ENCODE measurements at regions of chr10 and their contacts with region 1.

Region 1: DNA sequence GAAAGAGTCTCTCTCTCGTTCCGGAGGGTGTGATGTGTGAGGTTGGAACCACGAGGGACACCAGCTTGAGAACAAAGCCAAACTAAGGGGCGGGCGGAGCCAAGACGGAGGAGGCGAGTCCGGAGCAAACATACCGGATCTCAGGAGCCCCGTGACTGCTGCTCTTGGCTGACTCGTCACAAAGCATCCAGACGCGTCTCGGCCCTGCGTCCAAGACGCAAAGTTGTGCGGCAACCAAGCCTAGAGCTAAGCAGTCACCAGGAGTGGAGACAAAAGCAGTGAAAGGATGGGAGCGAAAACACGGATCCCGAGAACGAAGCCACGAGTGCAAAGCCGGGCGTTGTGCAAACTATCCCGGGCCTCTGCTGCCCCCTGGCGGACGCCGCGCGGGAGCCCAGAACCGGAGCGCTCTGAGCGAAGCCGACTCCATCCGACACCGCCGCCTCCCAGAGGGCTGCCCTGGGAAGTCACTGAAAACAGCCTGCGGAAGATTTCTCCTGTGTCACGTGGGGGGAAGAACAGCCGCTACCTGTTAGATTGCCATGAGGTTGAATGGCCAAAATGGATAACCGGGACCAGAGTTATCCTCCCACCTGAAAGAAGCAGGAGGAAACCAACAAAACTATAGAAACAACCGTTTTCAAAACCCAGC is 46.4 kb upstream of the TMEM72 start:
- DNase-seq: peak; percentile 77
- ATAC-seq: peak; percentile 88
- H3K4me3 Mint-ChIP-seq: peak overlapping the region; percentile 87
- H3K27ac Mint-ChIP-seq: no peak overlapping the region
- H3K4me1 Mint-ChIP-seq: peaks cover 12% of the 10 kb centered on the region
- H3K27me3 Mint-ChIP-seq: peaks cover 56% of the 10 kb centered on the region
- CTCF ChIP-seq: peak; percentile 54

Region 2: GRCh38 chr10:43671656-43672531 is 1192.9 kb before region 1 on chr10:
- CTCF ChIA-PET with region 1: interaction called, 7 read pairs
- POLR2A ChIA-PET with region 1: no interaction called
- intact Hi-C with region 1: loop called (anchors 1 kb)
- DNase-seq: no peak
- ATAC-seq: peak; percentile 56
- H3K4me3 Mint-ChIP-seq: no peak overlapping the region
- H3K27ac Mint-ChIP-seq: no peak overlapping the region
- H3K4me1 Mint-ChIP-seq: peaks cover 2% of the 10 kb centered on the region
- H3K27me3 Mint-ChIP-seq: peaks cover 40% of the 10 kb centered on the region
- CTCF ChIP-seq: peak; percentile 76

Measured in activated B cell treated with CpG ODN at 0.5 μM for 24 hours (primary cell).